ENCODE measurements at regions of chr7 and their contacts with region 1.

Region 1: GRCh38 chr7:85750454-85750949 is 563.6 kb upstream of the SEMA3D start:
- DNase-seq: peak; percentile 43
- CTCF ChIP-seq: peak; percentile 84

Region 2: DNA sequence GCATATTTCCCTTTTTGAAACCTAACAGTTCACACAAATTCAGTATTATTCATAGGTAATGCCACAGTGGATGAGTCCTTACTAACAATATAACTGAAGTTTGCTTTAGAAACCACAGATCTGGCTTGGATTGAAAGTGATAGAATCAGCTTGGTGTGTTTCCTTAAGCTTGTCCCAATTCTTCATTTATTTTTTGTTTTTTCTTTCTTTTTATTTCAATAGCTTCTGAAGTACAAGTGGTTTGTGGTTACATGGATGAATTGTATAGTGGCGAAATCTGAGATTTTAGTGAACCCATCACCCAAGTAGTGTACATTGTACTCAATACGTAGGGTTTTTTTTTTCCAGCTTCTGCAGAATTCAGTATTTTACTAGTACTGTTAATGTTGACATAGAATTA is 45.4 kb before region 1 on chr7:
- CTCF ChIA-PET with region 1: no interaction called
- POLR2A ChIA-PET with region 1: no interaction called
- DNase-seq: no peak
- CTCF ChIP-seq: no peak

Region 3: DNA sequence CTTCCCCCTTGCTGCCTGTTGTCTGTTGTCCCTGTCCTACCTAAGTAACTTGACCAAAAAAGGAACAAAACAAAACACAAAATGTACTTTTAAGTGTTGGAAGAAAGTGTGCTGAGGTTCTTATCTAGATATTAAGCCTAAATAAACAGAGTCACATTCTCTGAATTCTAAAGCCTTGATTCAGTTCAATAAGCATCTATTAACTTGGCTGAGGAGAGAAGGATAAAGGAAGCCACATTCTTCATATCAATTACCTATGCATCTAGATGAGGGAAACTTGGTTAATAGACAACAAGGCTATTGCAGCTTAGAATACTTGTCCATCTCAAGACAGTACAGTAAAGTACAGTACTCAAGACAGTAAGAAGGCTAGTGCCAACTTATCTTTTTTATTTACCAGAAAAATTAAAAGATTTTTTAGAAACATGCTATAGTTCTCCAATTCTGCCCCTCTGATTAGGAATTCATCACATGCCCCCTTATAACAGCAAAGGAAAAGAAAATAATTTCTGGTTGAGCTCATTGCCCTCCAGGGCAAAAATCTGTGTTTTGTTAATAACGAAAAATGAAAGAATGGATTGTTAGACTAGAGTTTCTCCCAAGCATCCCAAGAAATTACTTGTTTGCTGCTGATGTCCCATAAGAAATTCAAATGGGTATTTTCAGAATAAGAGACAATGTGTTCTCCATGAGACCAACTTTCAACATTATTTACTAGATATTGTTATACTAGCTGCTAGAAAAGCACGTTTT is 17.2 kb before region 1 on chr7:
- CTCF ChIA-PET with region 1: interaction called, 13 read pairs
- POLR2A ChIA-PET with region 1: no interaction called
- DNase-seq: no peak
- CTCF ChIP-seq: no peak

Region 4: DNA sequence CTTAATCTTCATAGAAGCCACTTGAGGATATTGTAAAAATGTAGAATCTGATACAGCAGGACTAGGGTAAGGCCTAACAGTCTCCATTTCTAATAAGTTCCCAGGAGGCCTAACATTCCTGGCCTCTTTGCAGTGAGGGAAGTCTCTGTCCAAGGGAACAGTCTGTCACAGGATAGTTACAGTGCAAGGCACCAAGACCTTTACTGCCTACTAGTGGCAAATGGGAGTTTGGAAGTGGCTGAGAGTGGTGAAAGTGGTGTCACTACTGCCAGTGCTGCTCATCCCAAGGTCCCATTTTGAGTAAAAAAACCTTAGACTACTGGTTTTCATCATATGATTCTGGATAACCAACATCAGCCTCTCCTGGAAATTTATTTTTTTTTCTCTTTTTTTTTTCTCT is 55.8 kb after region 1 on chr7:
- CTCF ChIA-PET with region 1: no interaction called
- POLR2A ChIA-PET with region 1: no interaction called
- DNase-seq: no peak
- CTCF ChIP-seq: no peak

Region 5: GRCh38 chr7:85890244-85890811 is 139.8 kb after region 1 on chr7:
- CTCF ChIA-PET with region 1: no interaction called
- POLR2A ChIA-PET with region 1: no interaction called
- DNase-seq: peak; percentile 33
- CTCF ChIP-seq: peak; percentile 43

Region 6: GRCh38 chr7:85997515-85997914 is 247.0 kb after region 1 on chr7:
- CTCF ChIA-PET with region 1: no interaction called
- POLR2A ChIA-PET with region 1: no interaction called
- DNase-seq: no peak
- CTCF ChIP-seq: no peak